Mammary epithelial cell (primary cell): ENCODE measurements at regions of chr2 and their contacts with region 1.

Region 1: DNA sequence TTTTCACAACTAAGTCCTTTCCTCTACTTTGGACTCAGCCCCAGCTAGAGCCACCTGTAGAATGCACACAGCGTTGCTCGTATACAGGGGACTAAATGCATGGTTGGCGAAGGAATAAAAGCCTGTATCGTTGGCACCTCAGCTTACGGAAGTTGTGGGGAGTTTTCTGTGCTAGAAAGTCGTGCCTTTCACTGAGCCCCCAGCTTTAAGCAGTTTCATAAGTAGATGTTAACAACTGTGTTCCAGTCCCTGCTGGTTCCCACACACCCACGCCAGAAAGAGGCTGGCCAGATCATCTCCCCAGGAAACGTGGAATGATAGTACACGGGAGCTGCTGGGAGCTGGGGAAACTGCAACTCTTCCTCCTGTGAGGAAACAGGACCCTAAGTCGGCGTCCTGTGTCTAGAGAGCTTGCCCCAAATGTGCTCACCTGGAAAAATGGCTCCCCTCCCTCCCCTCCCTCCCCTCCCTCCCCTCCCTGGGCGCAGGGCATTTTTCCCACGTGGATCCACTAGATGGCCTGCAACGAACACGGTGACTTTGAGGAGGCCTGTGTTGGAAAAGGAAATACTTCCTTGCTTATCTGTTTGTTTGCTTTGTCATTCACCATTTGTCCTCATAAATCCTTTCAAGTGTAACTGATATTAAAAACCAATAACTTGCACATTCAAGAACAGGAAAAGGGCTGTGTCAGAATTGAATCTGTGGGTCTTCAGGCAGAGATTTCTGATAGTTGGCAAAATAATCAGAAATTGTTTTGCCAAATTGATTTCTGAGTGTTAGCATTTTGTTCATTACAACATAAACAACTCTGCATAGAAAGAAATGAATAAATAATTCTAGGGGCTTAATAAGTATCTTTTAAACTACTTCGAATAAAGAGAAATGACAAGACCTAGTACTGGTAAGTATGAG is 43.9 kb upstream of the RFX8 start:
- DNase-seq: peak; percentile 65
- H3K4me3 ChIP-seq: peak overlapping the region in 1 of 3 experiments; percentile 5
- H3K27ac ChIP-seq: peak overlapping the region; percentile 95
- H3K4me1 ChIP-seq: peaks cover 68% of the 10 kb centered on the region
- H3K27me3 ChIP-seq: no peaks in the 10 kb centered on the region
- CTCF ChIP-seq: peak; percentile 33 to 75

Region 2: DNA sequence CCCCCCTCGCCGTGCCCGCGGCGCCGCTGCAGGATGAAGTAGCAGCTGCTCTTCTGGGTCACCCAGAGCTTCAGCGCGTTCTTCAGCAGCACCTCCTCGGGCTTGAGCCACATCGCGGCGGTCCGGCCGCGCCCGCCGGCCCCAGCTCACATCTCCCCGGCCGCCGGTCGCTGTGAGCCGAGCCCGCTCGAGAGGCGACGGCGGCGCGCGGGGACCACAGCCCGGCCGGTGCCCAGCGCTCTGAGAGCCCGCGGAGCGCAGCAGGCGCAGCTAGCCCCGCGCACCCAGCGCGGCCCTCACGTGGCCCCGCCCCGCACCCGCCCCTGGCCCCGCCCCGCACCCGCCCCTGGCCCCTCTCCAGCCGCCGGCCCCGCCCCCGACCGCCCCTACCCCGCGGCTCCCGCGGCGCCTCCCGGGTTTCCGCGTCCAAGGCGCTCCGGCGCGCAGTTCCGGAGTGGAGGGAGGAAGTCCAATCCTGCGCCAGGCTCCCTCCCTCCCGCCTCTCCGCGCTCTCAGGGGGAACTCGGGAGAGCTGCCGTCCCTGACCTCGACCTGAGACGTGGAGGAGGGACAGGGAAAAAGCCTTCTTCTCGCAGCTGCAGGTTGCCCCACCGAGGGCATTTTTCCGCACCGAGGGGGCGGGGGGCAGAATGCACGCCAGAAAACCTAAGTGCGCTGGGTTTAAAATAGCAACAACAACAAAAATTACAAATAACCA is 367.5 kb before region 1 on chr2 and contains the start of gene TBC1D8:
- CTCF ChIA-PET with region 1: no interaction called
- dilution Hi-C with region 1: no loop called
- in situ Hi-C with region 1: no loop called
- intact Hi-C with region 1: no loop called
- DNase-seq: peak; percentile 74
- H3K4me3 ChIP-seq: peak within 1 kb of the TSS; percentile 76 to 83 (median 82)
- H3K27ac ChIP-seq: peak within 1 kb of the TSS; percentile 55
- H3K4me1 ChIP-seq: peaks cover 25% of the 10 kb centered on the region
- H3K27me3 ChIP-seq: no peaks in the 10 kb centered on the region
- CTCF ChIP-seq: no peak
- total RNA-seq, gene TBC1D8: 9.0 to 19.2 TPM

Region 3: DNA sequence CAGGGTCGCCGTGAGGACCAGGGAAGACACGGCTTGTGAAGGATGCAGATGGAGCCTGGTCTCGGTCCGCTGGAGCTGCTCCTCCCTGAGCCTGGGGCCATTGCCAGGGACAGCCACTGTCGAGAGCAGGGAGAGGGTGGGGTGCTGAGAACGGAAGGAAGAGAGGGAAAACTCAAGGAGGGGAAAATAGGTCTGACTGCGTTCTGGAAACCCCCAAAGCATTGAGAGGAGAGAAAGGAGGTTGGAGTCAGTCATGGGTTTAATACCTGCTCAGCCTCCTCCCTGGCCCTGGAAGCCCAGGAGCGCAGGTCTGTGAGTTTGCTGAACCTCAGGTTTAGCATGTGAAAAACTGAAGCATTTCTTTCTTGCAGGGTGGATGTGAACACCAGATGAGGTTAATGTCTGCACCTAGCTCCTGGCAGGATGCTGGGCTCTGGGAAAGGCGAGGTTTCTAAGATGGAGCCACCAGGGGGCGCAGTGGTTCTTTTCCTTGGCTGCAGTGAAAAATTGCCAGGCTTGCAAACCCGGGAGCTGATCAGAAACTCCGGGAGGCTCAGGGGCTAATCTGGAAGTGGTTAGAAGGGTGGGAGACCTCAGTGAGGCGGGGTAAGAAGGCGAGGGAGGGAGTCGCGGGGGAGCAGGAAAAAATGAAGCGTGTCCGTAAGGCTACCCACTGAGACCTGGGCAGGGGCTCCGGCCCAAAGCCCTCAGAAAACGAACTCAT is 176.8 kb before region 1 on chr2:
- CTCF ChIA-PET with region 1: no interaction called
- dilution Hi-C with region 1: no loop called
- in situ Hi-C with region 1: loop called in 1 of 2 experiments (anchors 25 kb)
- intact Hi-C with region 1: loop called (anchors 5 kb)
- DNase-seq: peak; percentile 52
- H3K4me3 ChIP-seq: no peak overlapping the region
- H3K27ac ChIP-seq: no peak overlapping the region
- H3K4me1 ChIP-seq: no peaks in the 10 kb centered on the region
- H3K27me3 ChIP-seq: no peaks in the 10 kb centered on the region
- CTCF ChIP-seq: peak; percentile 80 to 84

Region 4: GRCh38 chr2:101630224-101630949 is 111.6 kb after region 1 on chr2:
- CTCF ChIA-PET with region 1: no interaction called
- dilution Hi-C with region 1: no loop called
- in situ Hi-C with region 1: no loop called
- intact Hi-C with region 1: loop called (anchors 5 kb)
- DNase-seq: peak; percentile 99
- H3K4me3 ChIP-seq: no peak overlapping the region
- H3K27ac ChIP-seq: peak overlapping the region; percentile 68
- H3K4me1 ChIP-seq: peaks cover 13% of the 10 kb centered on the region
- H3K27me3 ChIP-seq: no peaks in the 10 kb centered on the region
- CTCF ChIP-seq: no peak

Region 5: GRCh38 chr2:101736861-101737291 is 218.0 kb after region 1 on chr2:
- CTCF ChIA-PET with region 1: no interaction called
- dilution Hi-C with region 1: no loop called
- in situ Hi-C with region 1: no loop called
- intact Hi-C with region 1: loop called (anchors 2 kb)
- DNase-seq: peak; percentile 95
- H3K4me3 ChIP-seq: no peak overlapping the region
- H3K27ac ChIP-seq: peak overlapping the region; percentile 93
- H3K4me1 ChIP-seq: peaks cover 80% of the 10 kb centered on the region
- H3K27me3 ChIP-seq: no peaks in the 10 kb centered on the region
- CTCF ChIP-seq: no peak

Region 6: DNA sequence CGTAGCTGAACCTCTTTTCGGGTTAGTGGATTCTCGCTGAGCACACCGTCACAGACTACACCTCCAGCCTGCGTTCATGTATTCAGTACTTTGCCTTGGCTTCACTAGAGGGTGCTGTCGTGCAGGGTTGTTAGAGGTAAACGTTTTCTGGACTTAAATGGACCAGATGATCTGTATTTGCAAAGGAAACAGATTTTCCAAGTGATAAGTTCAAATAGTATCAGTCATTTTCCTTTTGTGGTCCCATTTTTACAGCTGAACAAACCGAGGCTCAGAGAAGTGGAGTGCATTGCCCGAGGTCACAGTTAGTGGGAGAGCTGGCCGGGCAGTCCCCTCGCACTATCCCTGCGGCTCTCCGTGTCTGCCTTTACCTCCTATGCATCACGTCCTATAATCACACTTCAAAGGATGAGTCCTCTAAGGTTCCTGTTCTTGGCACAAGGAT is 304.5 kb after region 1 on chr2:
- CTCF ChIA-PET with region 1: no interaction called
- dilution Hi-C with region 1: loop called (anchors 25 kb)
- in situ Hi-C with region 1: loop called (anchors 5 to 10 kb)
- intact Hi-C with region 1: no loop called
- DNase-seq: peak; percentile 75
- H3K4me3 ChIP-seq: peak overlapping the region in 2 of 3 experiments; percentile 3 to 4
- H3K27ac ChIP-seq: peak overlapping the region; percentile 88
- H3K4me1 ChIP-seq: peaks cover 81% of the 10 kb centered on the region
- H3K27me3 ChIP-seq: no peaks in the 10 kb centered on the region
- CTCF ChIP-seq: peak; percentile 79 to 86

Region 7: DNA sequence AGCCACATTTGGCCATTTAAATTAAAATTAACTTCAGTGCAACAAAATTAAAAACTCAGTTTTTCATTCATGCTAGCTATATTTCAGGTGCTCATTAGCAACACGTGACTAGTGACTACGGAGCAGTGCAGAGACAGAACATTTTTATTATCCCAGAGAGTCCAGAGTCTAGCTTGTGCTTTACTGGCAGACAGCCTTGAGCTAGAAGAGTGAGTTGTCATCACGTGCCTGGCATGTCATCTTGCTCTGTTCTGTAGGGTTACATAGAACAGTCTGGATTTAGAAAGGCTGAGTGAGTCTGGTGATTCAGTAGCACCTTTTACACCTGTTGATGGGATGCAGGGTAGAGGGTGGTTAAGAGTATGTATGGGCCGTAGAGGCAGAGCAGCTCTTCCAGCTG is 336.0 kb after region 1 on chr2:
- CTCF ChIA-PET with region 1: no interaction called
- dilution Hi-C with region 1: no loop called
- in situ Hi-C with region 1: loop called in 1 of 2 experiments (anchors 10 kb)
- intact Hi-C with region 1: no loop called
- DNase-seq: no peak
- H3K4me3 ChIP-seq: no peak overlapping the region
- H3K27ac ChIP-seq: no peak overlapping the region
- H3K4me1 ChIP-seq: peaks cover 26% of the 10 kb centered on the region
- H3K27me3 ChIP-seq: no peaks in the 10 kb centered on the region
- CTCF ChIP-seq: no peak